Thyroid gland (tissue), 4 donors: ENCODE measurements at regions of chr2 and their contacts with region 1.

Region 1: GRCh38 chr2:30706534-30707304 is 100.5 kb downstream of the CAPN13 start:
- DNase-seq: peak; percentile 82 to 83
- H3K4me3 ChIP-seq: no peak overlapping the region
- H3K27ac ChIP-seq: no peak overlapping the region
- H3K4me1 ChIP-seq: peaks cover 0 to 4% of the 10 kb centered on the region in 2 donors
- H3K27me3 ChIP-seq: no peaks in the 10 kb centered on the region
- CTCF ChIP-seq: peak; percentile 55 to 93 (median 84)
- POLR2A ChIP-seq: no peak

Region 2: GRCh38 chr2:30164131-30164925 is 542.4 kb before region 1 on chr2:
- intact Hi-C with region 1: loop called (anchors 5 kb)
- DNase-seq: no peak
- H3K4me3 ChIP-seq: no peak overlapping the region
- H3K27ac ChIP-seq: no peak overlapping the region
- H3K4me1 ChIP-seq: peaks cover 3 to 4% of the 10 kb centered on the region in 2 donors
- H3K27me3 ChIP-seq: no peaks in the 10 kb centered on the region
- CTCF ChIP-seq: no peak
- POLR2A ChIP-seq: no peak

Region 3: GRCh38 chr2:30208452-30208851 is 498.3 kb before region 1 on chr2:
- intact Hi-C with region 1: loop called (anchors 2 kb)
- DNase-seq: peak; percentile 71 to 72
- H3K4me3 ChIP-seq: no peak overlapping the region
- H3K27ac ChIP-seq: no peak overlapping the region
- H3K4me1 ChIP-seq: peaks cover 0 to 4% of the 10 kb centered on the region in 2 donors
- H3K27me3 ChIP-seq: no peaks in the 10 kb centered on the region
- CTCF ChIP-seq: peak; percentile 65 to 96 (median 90)
- POLR2A ChIP-seq: no peak